CD8-positive, alpha-beta T cell (primary cell): ENCODE measurements at regions of chr11 and their contacts with region 1.

Region 1: DNA sequence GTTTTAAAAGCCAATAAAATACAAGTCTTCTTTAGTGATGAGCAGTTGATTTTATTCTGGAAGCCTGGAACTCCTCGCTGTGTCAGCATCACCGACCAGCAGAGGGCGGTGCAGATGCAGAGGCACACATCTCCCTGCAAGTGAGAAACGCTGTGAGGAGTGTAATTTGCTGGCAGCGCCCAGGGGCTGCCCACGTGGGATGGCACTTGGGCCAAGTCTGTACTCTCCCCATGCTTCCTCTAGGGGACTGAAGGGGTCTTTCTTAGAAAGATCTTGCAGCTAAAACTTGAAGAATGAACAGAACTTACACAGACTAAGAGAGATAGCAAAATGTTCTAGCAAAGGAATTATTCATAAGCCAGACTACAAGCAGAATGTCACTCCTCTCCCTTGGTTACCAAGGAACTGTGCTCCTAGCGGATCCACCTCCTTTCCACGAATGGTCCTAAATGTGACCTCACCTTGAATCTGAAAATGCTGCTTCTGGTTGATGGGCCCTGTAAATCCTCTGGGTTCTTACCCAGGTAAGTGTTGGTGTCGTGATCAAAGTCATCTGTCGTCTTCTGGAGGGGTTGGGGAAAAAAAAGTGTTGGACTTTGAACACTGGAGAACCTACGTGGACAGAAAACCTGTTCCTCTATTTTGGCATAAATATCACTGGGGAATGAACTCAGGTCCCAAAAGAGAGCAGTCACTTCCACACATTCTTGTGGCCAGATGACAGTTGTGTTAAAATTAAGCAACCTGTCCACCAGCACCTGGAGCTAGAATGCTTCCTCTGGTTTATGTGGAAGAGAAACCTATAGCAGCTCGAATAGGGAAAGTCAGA is 31.8 kb downstream of the CNTF start:
- DNase-seq: peak; percentile 53 to 85 (median 79)
- ATAC-seq: peak; percentile 98
- H3K4me3 ChIP-seq: no peak overlapping the region
- H3K4me3 Mint-ChIP-seq: no peak overlapping the region
- H3K27ac ChIP-seq: no peak overlapping the region
- H3K27ac Mint-ChIP-seq: no peak overlapping the region
- H3K4me1 ChIP-seq: no peaks in the 10 kb centered on the region
- H3K4me1 Mint-ChIP-seq: peaks cover 4% of the 10 kb centered on the region
- H3K27me3 ChIP-seq: no peaks in the 10 kb centered on the region
- H3K27me3 Mint-ChIP-seq: no peaks in the 10 kb centered on the region
- CTCF ChIP-seq: peak; percentile 82

Region 2: GRCh38 chr11:58394195-58394594 is 260.1 kb before region 1 on chr11:
- CTCF ChIA-PET with region 1: no interaction called
- POLR2A ChIA-PET with region 1: no interaction called
- intact Hi-C with region 1: no loop called
- DNase-seq: no peak
- ATAC-seq: no peak
- H3K4me3 ChIP-seq: no peak overlapping the region
- H3K4me3 Mint-ChIP-seq: no peak overlapping the region
- H3K27ac ChIP-seq: no peak overlapping the region
- H3K27ac Mint-ChIP-seq: no peak overlapping the region
- H3K4me1 ChIP-seq: no peaks in the 10 kb centered on the region
- H3K4me1 Mint-ChIP-seq: no peaks in the 10 kb centered on the region
- H3K27me3 ChIP-seq: no peaks in the 10 kb centered on the region
- H3K27me3 Mint-ChIP-seq: no peaks in the 10 kb centered on the region
- CTCF ChIP-seq: no peak

Region 3: GRCh38 chr11:58616594-58616993 is 37.7 kb before region 1 on chr11:
- CTCF ChIA-PET with region 1: no interaction called
- POLR2A ChIA-PET with region 1: no interaction called
- intact Hi-C with region 1: no loop called
- DNase-seq: no peak
- ATAC-seq: no peak
- H3K4me3 ChIP-seq: no peak overlapping the region
- H3K4me3 Mint-ChIP-seq: no peak overlapping the region
- H3K27ac ChIP-seq: no peak overlapping the region
- H3K27ac Mint-ChIP-seq: no peak overlapping the region
- H3K4me1 ChIP-seq: peaks cover 7% of the 10 kb centered on the region
- H3K4me1 Mint-ChIP-seq: peaks cover 6% of the 10 kb centered on the region
- H3K27me3 ChIP-seq: no peaks in the 10 kb centered on the region
- H3K27me3 Mint-ChIP-seq: no peaks in the 10 kb centered on the region
- CTCF ChIP-seq: no peak

Region 4: GRCh38 chr11:58640386-58641023 is 13.8 kb before region 1 on chr11:
- CTCF ChIA-PET with region 1: interaction called, 11 read pairs
- POLR2A ChIA-PET with region 1: interaction called, 4 read pairs
- intact Hi-C with region 1: no loop called
- DNase-seq: peak in 3 of 9 experiments; percentile 32 to 63 (median 58)
- ATAC-seq: peak; percentile 70
- H3K4me3 ChIP-seq: no peak overlapping the region
- H3K4me3 Mint-ChIP-seq: no peak overlapping the region
- H3K27ac ChIP-seq: peak overlapping the region in 1 of 2 experiments; percentile 34
- H3K27ac Mint-ChIP-seq: peak overlapping the region; percentile 84
- H3K4me1 ChIP-seq: peaks cover 19% of the 10 kb centered on the region
- H3K4me1 Mint-ChIP-seq: peaks cover 27% of the 10 kb centered on the region
- H3K27me3 ChIP-seq: no peaks in the 10 kb centered on the region
- H3K27me3 Mint-ChIP-seq: no peaks in the 10 kb centered on the region
- CTCF ChIP-seq: no peak

Region 5: GRCh38 chr11:58788355-58789023 is 134.2 kb after region 1 on chr11:
- CTCF ChIA-PET with region 1: interaction called, 135 read pairs
- POLR2A ChIA-PET with region 1: no interaction called
- intact Hi-C with region 1: loop called (anchors 1 kb)
- DNase-seq: peak in 8 of 9 experiments; percentile 13 to 65 (median 48)
- ATAC-seq: peak; percentile 90
- H3K4me3 ChIP-seq: no peak overlapping the region
- H3K4me3 Mint-ChIP-seq: no peak overlapping the region
- H3K27ac ChIP-seq: no peak overlapping the region
- H3K27ac Mint-ChIP-seq: no peak overlapping the region
- H3K4me1 ChIP-seq: no peaks in the 10 kb centered on the region
- H3K4me1 Mint-ChIP-seq: peaks cover 3% of the 10 kb centered on the region
- H3K27me3 ChIP-seq: no peaks in the 10 kb centered on the region
- H3K27me3 Mint-ChIP-seq: peaks cover 4% of the 10 kb centered on the region
- CTCF ChIP-seq: peak; percentile 91

Region 6: DNA sequence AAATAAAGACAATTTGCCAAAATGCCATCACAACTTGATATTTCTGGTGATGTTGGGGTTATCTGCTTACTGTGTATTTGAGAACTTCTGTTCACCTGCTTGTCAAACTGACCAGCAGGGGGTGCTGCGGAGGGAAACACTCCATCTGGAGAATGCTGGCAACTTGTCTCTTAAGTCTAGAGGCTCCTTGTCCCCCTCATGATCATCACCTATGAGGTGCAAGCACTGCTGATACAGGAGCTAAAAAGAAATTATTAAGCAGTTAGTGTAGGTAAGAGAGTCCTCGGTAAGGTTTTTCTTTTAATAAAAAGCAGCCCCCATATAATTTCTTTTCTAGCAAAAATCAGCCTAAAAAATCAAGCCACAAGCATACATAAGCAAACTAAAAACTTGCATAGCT is 399.1 kb after region 1 on chr11:
- CTCF ChIA-PET with region 1: no interaction called
- POLR2A ChIA-PET with region 1: no interaction called
- intact Hi-C with region 1: loop called in 1 of 2 experiments (anchors 10 kb)
- DNase-seq: peak; percentile 56 to 84 (median 80)
- ATAC-seq: peak; percentile 73
- H3K4me3 ChIP-seq: no peak overlapping the region
- H3K4me3 Mint-ChIP-seq: no peak overlapping the region
- H3K27ac ChIP-seq: no peak overlapping the region
- H3K27ac Mint-ChIP-seq: no peak overlapping the region
- H3K4me1 ChIP-seq: no peaks in the 10 kb centered on the region
- H3K4me1 Mint-ChIP-seq: peaks cover 6% of the 10 kb centered on the region
- H3K27me3 ChIP-seq: no peaks in the 10 kb centered on the region
- H3K27me3 Mint-ChIP-seq: peaks cover 15% of the 10 kb centered on the region
- CTCF ChIP-seq: peak; percentile 73